ENCODE measurements at regions of chr6 and their contacts with region 1.

Region 1: GRCh38 chr6:134882426-134883038 is 67.4 kb downstream of the ALDH8A1 start:
- DNase-seq: peak; percentile 44
- H3K4me3 ChIP-seq: no peak overlapping the region
- H3K27ac ChIP-seq: no peak overlapping the region
- H3K4me1 ChIP-seq: peaks cover 0 to 2% of the 10 kb centered on the region in 2 experiments; a peak in 1 of 4 replicates
- H3K27me3 ChIP-seq: no peaks in the 10 kb centered on the region
- CTCF ChIP-seq: peak; percentile 77
- EP300 ChIP-seq: no peak
- RAD21 ChIP-seq: peak; percentile 90

Region 2: GRCh38 chr6:134174672-134175198 is 707.8 kb before region 1 on chr6:
- CTCF ChIA-PET with region 1: interaction called, 11 read pairs
- POLR2A ChIA-PET with region 1: no interaction called
- DNase-seq: peak; percentile 90
- H3K4me3 ChIP-seq: peak overlapping the region; percentile 76 to 78
- H3K27ac ChIP-seq: peak overlapping the region; percentile 76 to 94
- H3K4me1 ChIP-seq: peaks cover 16 to 32% of the 10 kb centered on the region in 2 experiments
- H3K27me3 ChIP-seq: no peaks in the 10 kb centered on the region
- CTCF ChIP-seq: no peak
- EP300 ChIP-seq: peak in 1 of 2 experiments; percentile 52; a peak in 1 of 4 replicates
- RAD21 ChIP-seq: peak; percentile 38

Region 3: DNA sequence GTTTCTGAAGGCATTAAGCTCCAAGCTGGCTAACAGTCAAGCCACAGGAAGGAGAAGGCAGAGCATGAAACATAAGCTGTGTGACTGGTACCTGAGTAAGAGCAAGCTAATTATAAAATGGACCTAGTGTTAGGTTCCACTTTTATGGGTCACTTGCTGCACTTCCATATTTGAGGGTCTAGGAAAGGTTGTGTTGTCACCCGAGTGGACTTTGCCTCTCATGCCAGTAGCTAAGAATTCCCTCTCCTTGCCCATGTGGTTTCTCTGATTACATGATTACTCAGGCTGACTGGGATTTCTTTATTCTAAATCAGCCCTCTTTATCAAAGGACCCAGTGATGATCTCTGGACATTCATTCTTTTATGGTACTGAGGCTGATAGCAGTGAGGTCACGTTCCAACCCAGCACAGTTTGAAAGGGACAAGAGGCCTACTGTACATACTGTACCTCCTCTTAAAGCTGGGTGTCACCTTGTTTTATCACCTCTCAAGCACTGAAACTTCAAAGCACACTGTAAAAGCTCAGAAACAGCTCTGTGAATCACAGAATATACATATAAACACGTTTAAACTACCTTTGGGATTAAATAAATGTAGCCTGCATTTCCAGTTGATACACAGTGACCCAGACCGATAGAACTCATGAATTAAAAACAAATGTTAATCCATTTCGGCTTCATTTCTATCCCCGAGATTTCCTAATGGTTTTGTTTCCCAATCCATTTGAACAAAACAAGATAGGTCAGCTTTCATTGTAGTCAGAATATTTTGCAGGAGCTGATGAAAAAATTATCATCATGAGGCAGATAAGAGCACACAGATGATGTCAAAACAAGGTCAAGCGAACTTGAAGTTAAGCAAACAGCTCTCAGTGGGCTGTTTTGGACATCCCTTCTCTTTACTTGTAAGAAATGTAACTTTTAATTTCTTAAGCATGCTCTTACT is 29.1 kb before region 1 on chr6:
- CTCF ChIA-PET with region 1: interaction called, 10 read pairs
- POLR2A ChIA-PET with region 1: no interaction called
- DNase-seq: no peak
- H3K4me3 ChIP-seq: no peak overlapping the region
- H3K27ac ChIP-seq: 0 out of 4 replicates have a peak overlapping the region, but pooled peaks of 1 of the 2 experiments have one; percentile 31
- H3K4me1 ChIP-seq: peaks cover 0 to 4% of the 10 kb centered on the region in 2 experiments; a peak in 2 of 4 replicates
- H3K27me3 ChIP-seq: no peaks in the 10 kb centered on the region
- CTCF ChIP-seq: no peak
- EP300 ChIP-seq: no peak; a peak in 1 of 4 replicates
- RAD21 ChIP-seq: no peak

Measured in SK-N-SH (cell line).